Ovary (tissue), 10 donors: ENCODE measurements at regions of chr11 and their contacts with region 1.

Region 1: GRCh38 chr11:15101072-15101709 is 13.5 kb upstream of the INSC start:
- DNase-seq: peak in 2 of 5 donors; percentile 19 to 40
- H3K4me3 ChIP-seq: no peak overlapping the region
- H3K27ac ChIP-seq: no peak overlapping the region
- H3K4me1 ChIP-seq: no peaks in the 10 kb centered on the region
- H3K27me3 ChIP-seq: no peaks in the 10 kb centered on the region
- CTCF ChIP-seq: no peak
- EP300 ChIP-seq: no peak
- POLR2A ChIP-seq: no peak

Region 2: GRCh38 chr11:14974515-14975251 is 126.5 kb before region 1 on chr11:
- intact Hi-C with region 1: no loop called
- DNase-seq: no peak
- H3K4me3 ChIP-seq: no peak overlapping the region
- H3K27ac ChIP-seq: no peak overlapping the region
- H3K4me1 ChIP-seq: no peaks in the 10 kb centered on the region
- H3K27me3 ChIP-seq: no peaks in the 10 kb centered on the region
- CTCF ChIP-seq: no peak
- EP300 ChIP-seq: no peak
- POLR2A ChIP-seq: no peak

Region 3: GRCh38 chr11:15053191-15053685 is 48.0 kb before region 1 on chr11:
- intact Hi-C with region 1: no loop called
- DNase-seq: no peak
- H3K4me3 ChIP-seq: no peak overlapping the region
- H3K27ac ChIP-seq: no peak overlapping the region
- H3K4me1 ChIP-seq: no peaks in the 10 kb centered on the region
- H3K27me3 ChIP-seq: no peaks in the 10 kb centered on the region
- CTCF ChIP-seq: no peak
- EP300 ChIP-seq: no peak
- POLR2A ChIP-seq: no peak

Region 4: GRCh38 chr11:15208378-15209222 is 107.4 kb after region 1 on chr11:
- intact Hi-C with region 1: loop called in 1 of 4 experiments (anchors 5 kb)
- DNase-seq: peak in 4 of 5 donors; percentile 20 to 51 (median 36)
- H3K4me3 ChIP-seq: no peak overlapping the region
- H3K27ac ChIP-seq: no peak overlapping the region
- H3K4me1 ChIP-seq: no peaks in the 10 kb centered on the region
- H3K27me3 ChIP-seq: no peaks in the 10 kb centered on the region
- CTCF ChIP-seq: peak in 1 of 3 donors; percentile 23
- EP300 ChIP-seq: no peak
- POLR2A ChIP-seq: no peak

Region 5: DNA sequence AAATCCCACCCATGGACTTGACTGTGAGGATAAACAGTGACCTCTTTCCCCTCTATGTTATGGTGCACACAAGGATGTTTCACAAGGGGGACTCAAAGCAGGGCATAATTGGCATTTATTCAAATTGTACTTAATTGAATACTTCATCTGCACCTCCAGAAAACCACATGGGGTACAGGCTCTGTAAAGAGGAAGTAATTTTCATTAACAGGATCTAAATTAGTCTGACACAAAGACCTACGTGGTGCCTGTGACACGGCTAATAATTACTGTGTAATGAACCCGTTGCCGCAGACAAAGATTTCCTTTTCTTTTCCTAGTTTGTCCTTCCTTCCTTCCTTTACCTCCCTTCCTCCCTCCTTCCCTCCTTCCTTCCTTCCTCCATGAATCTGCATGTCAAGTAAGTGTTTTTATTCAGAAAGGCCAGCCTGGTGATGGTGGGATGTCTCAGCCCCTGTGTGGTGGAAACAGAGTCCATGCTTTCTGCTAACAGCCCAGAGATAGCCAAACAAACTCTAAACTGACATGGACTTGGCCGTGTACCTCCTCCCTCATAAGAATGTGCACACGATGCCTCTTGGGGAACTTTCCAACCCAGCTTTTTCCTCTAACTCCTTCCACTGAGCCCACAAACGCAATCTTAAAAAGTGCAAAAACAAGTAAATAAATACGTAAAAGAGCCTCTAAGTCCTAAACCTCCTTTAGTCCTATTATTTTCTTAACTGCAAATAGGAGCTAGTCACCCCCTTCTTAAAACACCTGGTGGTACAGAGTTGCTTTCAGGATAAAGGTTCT is 132.4 kb after region 1 on chr11:
- intact Hi-C with region 1: no loop called
- DNase-seq: no peak
- H3K4me3 ChIP-seq: no peak overlapping the region
- H3K27ac ChIP-seq: no peak overlapping the region
- H3K4me1 ChIP-seq: no peaks in the 10 kb centered on the region
- H3K27me3 ChIP-seq: no peaks in the 10 kb centered on the region
- CTCF ChIP-seq: no peak
- EP300 ChIP-seq: no peak
- POLR2A ChIP-seq: no peak